Activated B cell treated with CpG ODN at 0.5 μM for 24 hours (primary cell): ENCODE measurements at regions of chr6 and their contacts with region 1.

Region 1: GRCh38 chr6:109332748-109333147 is 49.5 kb downstream of the CD164 start:
- DNase-seq: no peak
- ATAC-seq: no peak
- H3K4me3 Mint-ChIP-seq: no peak overlapping the region
- H3K27ac Mint-ChIP-seq: no peak overlapping the region
- H3K4me1 Mint-ChIP-seq: no peaks in the 10 kb centered on the region
- H3K27me3 Mint-ChIP-seq: no peaks in the 10 kb centered on the region
- CTCF ChIP-seq: no peak

Region 2: DNA sequence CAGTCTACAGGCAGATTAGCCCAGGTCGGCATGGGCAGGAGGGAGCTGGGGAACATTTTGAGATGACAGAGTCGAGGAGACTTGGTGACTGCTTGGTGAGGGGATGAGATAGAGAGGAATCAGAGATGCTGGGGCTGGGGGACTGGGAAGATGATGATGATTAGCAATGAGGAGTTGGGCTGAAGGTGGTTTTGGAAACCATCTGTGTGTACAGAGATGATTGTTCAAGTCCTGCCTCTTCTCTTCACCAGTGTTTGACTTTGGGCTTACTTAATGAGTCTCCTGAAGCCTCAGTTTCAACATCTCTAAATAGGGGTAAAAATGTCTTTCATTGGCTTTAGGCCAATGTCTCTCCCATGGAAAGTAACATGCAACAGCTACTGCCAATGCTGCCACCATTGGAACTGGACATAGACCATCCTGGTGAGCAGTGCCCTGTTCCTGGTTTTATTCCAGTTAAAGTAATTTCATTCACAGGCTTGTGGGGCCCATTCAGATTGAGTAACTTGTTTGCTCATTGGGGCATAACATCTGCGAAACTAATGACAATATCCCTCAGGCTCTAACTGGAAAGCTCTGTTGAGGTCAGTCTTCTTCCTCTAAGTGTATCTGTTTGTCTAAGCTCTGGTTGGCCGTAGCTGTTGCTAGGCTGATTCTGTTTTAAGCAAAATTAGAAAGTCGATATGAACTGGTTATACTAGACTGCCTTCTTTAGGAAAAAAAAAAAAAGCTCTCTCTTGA is 385.5 kb before region 1 on chr6:
- CTCF ChIA-PET with region 1: no interaction called
- POLR2A ChIA-PET with region 1: no interaction called
- intact Hi-C with region 1: no loop called
- DNase-seq: no peak
- ATAC-seq: no peak
- H3K4me3 Mint-ChIP-seq: no peak overlapping the region
- H3K27ac Mint-ChIP-seq: no peak overlapping the region
- H3K4me1 Mint-ChIP-seq: peaks cover 34% of the 10 kb centered on the region
- H3K27me3 Mint-ChIP-seq: no peaks in the 10 kb centered on the region
- CTCF ChIP-seq: no peak

Region 3: GRCh38 chr6:109318328-109318876 is 14.3 kb before region 1 on chr6:
- CTCF ChIA-PET with region 1: no interaction called
- POLR2A ChIA-PET with region 1: no interaction called
- intact Hi-C with region 1: no loop called
- DNase-seq: no peak
- ATAC-seq: no peak
- H3K4me3 Mint-ChIP-seq: no peak overlapping the region
- H3K27ac Mint-ChIP-seq: no peak overlapping the region
- H3K4me1 Mint-ChIP-seq: peaks cover 10% of the 10 kb centered on the region
- H3K27me3 Mint-ChIP-seq: no peaks in the 10 kb centered on the region
- CTCF ChIP-seq: no peak

Region 4: GRCh38 chr6:109373762-109374161 is 41.0 kb after region 1 on chr6:
- CTCF ChIA-PET with region 1: no interaction called
- POLR2A ChIA-PET with region 1: no interaction called
- intact Hi-C with region 1: loop called (anchors 5 kb)
- DNase-seq: no peak
- ATAC-seq: peak; percentile 95
- H3K4me3 Mint-ChIP-seq: peak overlapping the region; percentile 41
- H3K27ac Mint-ChIP-seq: peak overlapping the region; percentile 79
- H3K4me1 Mint-ChIP-seq: peaks cover 51% of the 10 kb centered on the region
- H3K27me3 Mint-ChIP-seq: no peaks in the 10 kb centered on the region
- CTCF ChIP-seq: no peak